ENCODE measurements at regions of chr3 and their contacts with region 1.

Region 1: GRCh38 chr3:113287803-113288648 is 76.7 kb downstream of the BOC start:
- DNase-seq: peak; percentile 62
- ATAC-seq: peak; percentile 74
- H3K4me3 Mint-ChIP-seq: no peak overlapping the region
- H3K27ac Mint-ChIP-seq: no peak overlapping the region
- H3K4me1 Mint-ChIP-seq: no peaks in the 10 kb centered on the region
- H3K27me3 Mint-ChIP-seq: no peaks in the 10 kb centered on the region; the same call in 1 of the 2 replicates
- CTCF ChIP-seq: peak; percentile 95

Region 2: GRCh38 chr3:113051302-113051711 is 236.7 kb before region 1 on chr3:
- CTCF ChIA-PET with region 1: interaction called, 28 read pairs
- POLR2A ChIA-PET with region 1: no interaction called
- DNase-seq: peak; percentile 90
- ATAC-seq: peak; percentile 99
- H3K4me3 Mint-ChIP-seq: no peak overlapping the region
- H3K27ac Mint-ChIP-seq: no peak overlapping the region
- H3K4me1 Mint-ChIP-seq: 0 out of 2 replicates have a peak, but pooled peaks cover 3% of the 10 kb centered on the region
- H3K27me3 Mint-ChIP-seq: peaks cover 2% of the 10 kb centered on the region; the same call in 1 of the 2 replicates
- CTCF ChIP-seq: peak; percentile 88

Region 3: DNA sequence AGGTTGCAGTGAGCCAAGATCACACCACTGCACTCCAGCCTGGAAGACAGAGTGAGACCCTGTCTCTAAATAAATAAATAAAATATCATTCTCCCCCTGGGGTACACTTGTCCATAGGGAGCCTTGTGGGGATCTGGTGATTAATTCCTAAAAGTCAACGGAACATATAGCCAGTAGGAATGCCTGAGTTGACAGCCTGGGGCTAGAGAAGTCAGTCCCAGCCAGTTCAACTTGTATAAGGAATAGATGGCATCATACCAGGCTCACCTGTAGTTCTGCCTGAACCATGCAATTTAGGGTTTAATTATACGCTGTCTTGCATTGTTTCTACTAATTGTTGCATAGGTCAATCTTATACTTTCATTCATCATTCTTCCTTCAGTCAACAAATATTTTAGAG is 82.5 kb before region 1 on chr3:
- CTCF ChIA-PET with region 1: interaction called, 11 read pairs
- POLR2A ChIA-PET with region 1: no interaction called
- DNase-seq: no peak
- ATAC-seq: no peak
- H3K4me3 Mint-ChIP-seq: no peak overlapping the region
- H3K27ac Mint-ChIP-seq: no peak overlapping the region
- H3K4me1 Mint-ChIP-seq: peaks cover 15% of the 10 kb centered on the region
- H3K27me3 Mint-ChIP-seq: no peaks in the 10 kb centered on the region; the same call in 1 of the 2 replicates
- CTCF ChIP-seq: no peak

Region 4: DNA sequence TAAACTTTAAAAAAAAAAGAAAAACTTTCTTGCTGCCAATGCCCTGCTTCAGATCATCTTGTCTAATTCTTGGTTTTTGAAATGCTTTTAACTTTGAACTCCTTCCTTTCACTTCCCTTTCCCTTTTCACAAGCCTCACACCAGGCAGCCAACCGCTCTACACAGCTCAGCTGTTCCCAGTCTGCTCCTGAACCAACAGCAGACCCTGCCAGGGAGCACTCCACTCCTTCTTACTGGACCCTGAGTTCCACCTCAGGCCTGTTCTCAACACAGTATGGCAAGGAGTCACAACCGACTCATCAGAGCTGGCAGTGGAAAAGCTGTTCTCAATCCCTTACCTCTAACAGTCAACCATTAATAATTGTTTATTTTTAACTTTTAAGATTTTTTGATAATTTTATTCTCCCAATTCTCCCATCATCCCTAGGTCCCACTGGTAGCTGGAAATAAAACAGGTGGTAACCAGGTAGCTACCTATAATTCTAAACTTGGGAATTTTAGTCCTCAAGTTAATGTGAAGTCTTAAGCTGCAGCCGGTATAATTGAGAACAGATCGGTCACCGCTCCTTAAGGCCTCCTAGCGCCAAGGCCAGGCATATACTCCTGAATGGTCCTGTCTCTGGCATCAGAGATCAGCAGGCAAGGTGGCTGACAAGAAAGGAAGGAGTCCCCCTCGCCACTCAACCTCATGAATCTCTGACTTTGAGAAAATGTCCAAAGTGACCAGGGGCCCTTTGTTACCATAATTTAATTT is 32.7 kb before region 1 on chr3:
- CTCF ChIA-PET with region 1: interaction called, 31 read pairs
- POLR2A ChIA-PET with region 1: no interaction called
- DNase-seq: no peak
- ATAC-seq: peak; percentile 65
- H3K4me3 Mint-ChIP-seq: no peak overlapping the region
- H3K27ac Mint-ChIP-seq: 0 out of 2 replicates have a peak overlapping the region, but pooled peaks have one; percentile 31
- H3K4me1 Mint-ChIP-seq: peaks cover 25% of the 10 kb centered on the region
- H3K27me3 Mint-ChIP-seq: no peaks in the 10 kb centered on the region
- CTCF ChIP-seq: no peak

Region 5: GRCh38 chr3:113269661-113270060 is 18.4 kb before region 1 on chr3:
- CTCF ChIA-PET with region 1: interaction called, 26 read pairs
- POLR2A ChIA-PET with region 1: no interaction called
- DNase-seq: no peak
- ATAC-seq: no peak
- H3K4me3 Mint-ChIP-seq: no peak overlapping the region
- H3K27ac Mint-ChIP-seq: no peak overlapping the region
- H3K4me1 Mint-ChIP-seq: peaks cover 32% of the 10 kb centered on the region
- H3K27me3 Mint-ChIP-seq: peaks cover 2% of the 10 kb centered on the region; the same call in 1 of the 2 replicates
- CTCF ChIP-seq: no peak

Region 6: DNA sequence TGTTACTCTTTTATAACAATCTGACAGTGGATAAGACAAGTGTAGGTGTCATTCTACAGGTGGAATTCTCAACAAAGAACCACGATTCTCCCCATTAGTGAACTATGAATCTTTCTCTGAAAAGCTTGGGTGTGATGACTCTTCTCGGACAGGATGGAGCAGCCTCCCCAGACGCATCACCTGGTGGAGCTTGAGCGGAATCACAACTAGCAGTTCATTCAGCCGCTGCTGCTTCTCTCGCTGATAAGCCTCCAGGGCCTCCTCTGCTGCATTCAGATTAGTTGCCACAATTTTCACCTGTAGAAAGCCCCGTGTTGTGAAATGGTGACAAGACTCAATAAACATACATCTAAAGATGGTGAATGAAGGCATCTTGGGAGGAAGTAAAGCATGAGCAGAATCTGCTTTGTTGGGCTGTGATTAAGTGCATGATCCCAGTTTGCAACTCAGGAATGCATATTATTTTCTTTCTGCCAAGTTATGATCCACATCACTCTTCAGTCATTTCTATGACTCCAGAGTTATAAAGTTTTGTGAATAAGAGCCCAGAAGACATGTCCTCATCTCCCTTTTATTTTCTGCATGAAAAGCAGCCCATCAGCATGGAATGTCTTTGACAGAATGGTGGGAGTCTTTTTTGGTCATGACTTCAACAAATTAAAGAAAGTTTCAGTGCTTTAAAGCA is 17.0 kb after region 1 on chr3:
- CTCF ChIA-PET with region 1: interaction called, 25 read pairs
- POLR2A ChIA-PET with region 1: no interaction called
- DNase-seq: peak; percentile 38
- ATAC-seq: peak; percentile 95
- H3K4me3 Mint-ChIP-seq: no peak overlapping the region
- H3K27ac Mint-ChIP-seq: no peak overlapping the region
- H3K4me1 Mint-ChIP-seq: 0 out of 2 replicates have a peak, but pooled peaks cover 6% of the 10 kb centered on the region
- H3K27me3 Mint-ChIP-seq: no peaks in the 10 kb centered on the region; the same call in 1 of the 2 replicates
- CTCF ChIP-seq: no peak

Region 7: GRCh38 chr3:113377158-113377557 is 89.1 kb after region 1 on chr3:
- CTCF ChIA-PET with region 1: no interaction called
- POLR2A ChIA-PET with region 1: no interaction called
- DNase-seq: no peak
- ATAC-seq: no peak
- H3K4me3 Mint-ChIP-seq: no peak overlapping the region
- H3K27ac Mint-ChIP-seq: no peak overlapping the region
- H3K4me1 Mint-ChIP-seq: no peaks in the 10 kb centered on the region
- H3K27me3 Mint-ChIP-seq: no peaks in the 10 kb centered on the region; the same call in 1 of the 2 replicates
- CTCF ChIP-seq: no peak

Region 8: GRCh38 chr3:113660896-113661295 is 372.9 kb after region 1 on chr3:
- CTCF ChIA-PET with region 1: no interaction called
- POLR2A ChIA-PET with region 1: no interaction called
- DNase-seq: no peak
- ATAC-seq: no peak
- H3K4me3 Mint-ChIP-seq: no peak overlapping the region
- H3K27ac Mint-ChIP-seq: no peak overlapping the region
- H3K4me1 Mint-ChIP-seq: peaks cover 5% of the 10 kb centered on the region; the same call in 1 of the 2 replicates
- H3K27me3 Mint-ChIP-seq: no peaks in the 10 kb centered on the region
- CTCF ChIP-seq: no peak